Pancreas (tissue), 10 donors: ENCODE measurements at regions of chr5 and their contacts with region 1.

Region 1: DNA sequence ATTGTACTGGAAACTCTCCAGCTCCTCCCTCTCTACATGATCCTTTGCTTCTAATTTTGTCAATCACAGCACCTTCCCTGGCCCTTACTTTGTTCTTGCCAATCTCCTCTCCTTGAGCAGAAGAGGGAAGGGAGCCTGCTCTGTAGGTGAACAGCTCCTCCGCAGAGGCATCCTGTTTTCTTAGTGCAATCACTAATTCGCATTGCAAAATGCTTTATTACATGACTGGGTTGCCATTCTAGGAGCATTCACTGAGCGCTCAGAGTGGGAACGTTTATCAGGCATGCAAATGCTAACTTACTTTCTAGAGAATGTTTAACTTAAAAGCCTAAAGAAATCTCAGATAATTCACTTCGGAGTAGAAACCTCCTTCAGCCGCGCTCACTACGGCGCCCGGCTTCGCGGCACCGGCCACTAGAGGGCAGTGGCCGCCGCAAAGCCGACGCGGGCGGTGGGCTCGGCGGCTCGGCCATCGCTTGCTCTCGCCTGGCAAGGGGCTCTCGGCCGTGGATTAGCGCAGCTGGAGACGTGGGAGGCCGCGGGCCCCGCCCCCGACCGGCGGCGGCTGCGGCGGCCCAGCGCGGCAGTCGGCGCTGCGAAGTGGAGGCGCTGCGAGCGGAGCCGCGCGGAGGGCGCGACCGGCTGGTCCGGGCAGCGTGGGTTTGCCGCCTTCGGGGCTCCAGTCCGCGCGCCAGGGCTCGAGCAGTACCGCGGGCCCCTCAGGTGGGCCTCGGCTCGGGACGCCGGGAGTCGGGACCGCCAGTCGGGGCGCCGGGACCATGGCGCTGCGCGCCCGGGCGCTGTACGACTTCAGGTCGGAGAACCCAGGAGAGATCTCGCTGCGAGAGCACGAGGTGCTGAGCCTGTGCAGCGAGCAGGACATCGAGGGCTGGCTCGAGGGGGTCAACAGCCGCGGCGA is at the start of gene SNX18:
- DNase-seq: peak; percentile 91 to 96 (median 94)
- ATAC-seq: peak; percentile 92 to 96 (median 94)
- H3K4me3 ChIP-seq: peak within 1 kb of the TSS; percentile 88 to 99 (median 96)
- H3K27ac ChIP-seq: peak within 1 kb of the TSS; percentile 91 to 96 (median 93)
- H3K4me1 ChIP-seq: peaks cover 0 to 24% (median 6%) of the 10 kb centered on the region in 3 donors
- H3K27me3 ChIP-seq: no peaks in the 10 kb centered on the region
- CTCF ChIP-seq: peak; percentile 94 to 100 (median 96)
- total RNA-seq, gene SNX18: 10.2 to 20.0 (median 14.3) TPM

Region 2: GRCh38 chr5:54753034-54753433 is 235.6 kb after region 1 on chr5:
- intact Hi-C with region 1: loop called in 1 of 3 experiments (anchors 10 kb)
- DNase-seq: no peak
- ATAC-seq: peak in 2 of 4 donors; percentile 55 to 66
- H3K4me3 ChIP-seq: no peak overlapping the region
- H3K27ac ChIP-seq: no peak overlapping the region
- H3K4me1 ChIP-seq: no peaks in the 10 kb centered on the region
- H3K27me3 ChIP-seq: no peaks in the 10 kb centered on the region
- CTCF ChIP-seq: no peak

Region 3: DNA sequence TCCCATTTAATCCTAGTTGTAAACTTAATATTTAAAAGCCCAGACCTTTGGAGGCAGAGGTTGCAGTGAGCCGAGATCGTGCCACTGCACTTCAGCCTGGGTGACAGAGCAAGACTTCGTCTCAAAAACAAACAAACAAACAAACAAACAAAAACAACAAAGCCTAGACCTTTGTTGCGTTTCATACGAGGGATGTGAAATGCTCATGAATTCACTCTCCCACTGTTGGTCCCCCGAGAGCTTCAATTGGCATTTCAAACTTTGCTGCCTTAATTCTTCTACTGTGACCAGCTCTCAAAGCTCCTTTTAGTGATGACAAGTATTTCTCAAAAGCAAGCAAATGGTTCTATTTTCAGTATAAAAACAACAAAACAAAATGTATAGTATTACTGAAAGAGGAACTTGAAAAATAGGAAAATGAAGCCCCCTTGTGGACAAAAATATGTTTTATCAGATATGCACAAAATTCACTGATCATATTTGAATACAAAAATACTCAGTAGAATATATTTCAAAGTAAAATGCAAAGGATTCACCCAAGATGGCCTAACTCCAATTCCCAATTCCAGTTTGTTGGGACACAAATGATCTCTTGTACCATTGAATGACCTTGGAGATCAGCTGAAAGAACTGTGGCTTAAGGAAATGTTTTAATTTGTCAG is 327.6 kb after region 1 on chr5:
- intact Hi-C with region 1: loop called in 2 of 3 experiments (anchors 5 kb)
- DNase-seq: no peak
- ATAC-seq: peak in 3 of 4 donors; percentile 48 to 73 (median 72)
- H3K4me3 ChIP-seq: no peak overlapping the region
- H3K27ac ChIP-seq: no peak overlapping the region
- H3K4me1 ChIP-seq: no peaks in the 10 kb centered on the region
- H3K27me3 ChIP-seq: no peaks in the 10 kb centered on the region
- CTCF ChIP-seq: peak; percentile 26 to 60 (median 48)